WTC11 (cell line): ENCODE measurements at regions of chr9 and their contacts with region 1.

Region 1: GRCh38 chr9:113221003-113221799 is at the starts of genes FKBP15 and SLC31A1:
- DNase-seq: peak; percentile 99
- ATAC-seq: peak; percentile 98
- H3K4me3 Mint-ChIP-seq: peak within 1 kb of the TSS; percentile 98
- H3K27ac Mint-ChIP-seq: peak within 1 kb of the TSS; percentile 96
- H3K4me1 Mint-ChIP-seq: peaks cover 26% of the 10 kb centered on the region
- H3K27me3 Mint-ChIP-seq: no peaks in the 10 kb centered on the region
- CTCF ChIP-seq: no peak
- total RNA-seq, gene FKBP15: 13.5 to 14.9 TPM (median 13.9 TPM) in 3 replicates
- total RNA-seq, gene SLC31A1: 41.6 to 43.9 TPM (median 43.6 TPM) in 3 replicates

Region 2: GRCh38 chr9:113150670-113151611 is 70.3 kb before region 1 on chr9 and contains the start of gene SLC31A2:
- CTCF ChIA-PET with region 1: interaction called, 8 read pairs
- POLR2A ChIA-PET with region 1: interaction called, 18 read pairs
- DNase-seq: peak; percentile 93
- ATAC-seq: peak; percentile 93
- H3K4me3 Mint-ChIP-seq: peak within 1 kb of the TSS; percentile 72
- H3K27ac Mint-ChIP-seq: no peak within 1 kb of the TSS
- H3K4me1 Mint-ChIP-seq: peaks cover 11% of the 10 kb centered on the region
- H3K27me3 Mint-ChIP-seq: peaks cover 22% of the 10 kb centered on the region
- CTCF ChIP-seq: no peak
- total RNA-seq, gene SLC31A2: 1.7 to 2.0 TPM (median 1.8 TPM) in 3 replicates